ENCODE measurements at regions of chr7 and their contacts with region 1.

Region 1: GRCh38 chr7:86733783-86734182 is 90.1 kb downstream of the GRM3 start:
- DNase-seq: no peak
- H3K4me3 Mint-ChIP-seq: no peak overlapping the region
- H3K27ac Mint-ChIP-seq: no peak overlapping the region
- H3K4me1 Mint-ChIP-seq: no peaks in the 10 kb centered on the region
- H3K27me3 Mint-ChIP-seq: no peaks in the 10 kb centered on the region

Region 2: GRCh38 chr7:86534641-86535040 is 199.1 kb before region 1 on chr7:
- CTCF ChIA-PET with region 1: no interaction called
- POLR2A ChIA-PET with region 1: no interaction called
- intact Hi-C with region 1: no loop called
- DNase-seq: no peak
- H3K4me3 Mint-ChIP-seq: no peak overlapping the region
- H3K27ac Mint-ChIP-seq: no peak overlapping the region
- H3K4me1 Mint-ChIP-seq: no peaks in the 10 kb centered on the region
- H3K27me3 Mint-ChIP-seq: no peaks in the 10 kb centered on the region

Region 3: GRCh38 chr7:86790383-86790782 is 56.6 kb after region 1 on chr7:
- CTCF ChIA-PET with region 1: no interaction called
- POLR2A ChIA-PET with region 1: no interaction called
- intact Hi-C with region 1: loop called (anchors 10 kb)
- DNase-seq: no peak
- H3K4me3 Mint-ChIP-seq: no peak overlapping the region
- H3K27ac Mint-ChIP-seq: no peak overlapping the region
- H3K4me1 Mint-ChIP-seq: no peaks in the 10 kb centered on the region
- H3K27me3 Mint-ChIP-seq: peaks cover 2% of the 10 kb centered on the region

Measured in activated CD4-positive, alpha-beta memory T cell treated with anti-CD3 and anti-CD28 coated beads for 36 hours (primary cell).